Activated B cell treated with CpG ODN at 0.5 μM for 24 hours (primary cell): ENCODE measurements at regions of chr1 and their contacts with region 1.

Region 1: DNA sequence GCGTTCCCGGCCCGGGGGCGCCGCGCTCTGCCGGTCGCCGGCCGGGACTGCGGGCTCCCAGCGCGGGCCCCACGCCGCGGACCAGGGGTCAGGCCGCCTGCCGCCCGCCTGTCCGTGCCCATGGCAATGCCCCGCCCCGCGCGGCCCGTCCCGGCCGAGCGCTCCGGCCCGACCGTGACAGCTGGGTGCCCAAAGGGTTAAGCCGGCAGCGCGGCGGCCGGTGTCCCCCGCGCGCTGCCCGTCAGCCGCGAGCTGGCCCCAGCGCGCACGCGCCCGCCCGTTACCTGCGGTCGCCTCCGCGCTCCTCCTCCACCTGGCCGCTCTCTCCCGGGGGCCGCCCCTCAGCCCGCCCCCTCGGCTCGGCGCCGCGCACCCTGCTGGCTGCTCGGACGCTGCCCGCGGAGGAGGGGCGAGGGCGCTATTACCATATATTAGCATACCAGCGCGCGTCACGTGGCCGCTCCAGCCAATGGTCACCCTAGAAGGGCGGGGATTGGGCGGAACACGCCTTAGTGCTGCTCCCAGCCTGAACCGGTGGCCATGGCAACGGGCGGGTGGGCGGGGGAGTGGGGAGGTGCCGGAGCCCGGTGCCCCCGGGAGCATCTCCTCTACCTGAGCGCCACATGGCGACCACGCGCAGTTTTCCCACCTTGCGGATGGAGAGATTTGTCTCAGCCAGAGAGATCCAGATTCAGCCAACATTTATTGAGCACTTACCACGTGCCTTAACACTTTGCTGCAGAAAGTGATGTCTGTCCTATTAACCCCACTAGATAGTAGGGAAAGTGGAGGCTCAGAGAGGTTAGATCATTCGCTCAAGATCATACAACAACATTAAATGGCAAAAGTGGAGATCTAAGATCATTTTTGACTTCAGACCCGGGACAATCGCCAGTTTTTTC is at the start of gene PHC2:
- DNase-seq: peak; percentile 85
- ATAC-seq: peak; percentile 96
- H3K4me3 Mint-ChIP-seq: peak within 1 kb of the TSS; percentile 66
- H3K27ac Mint-ChIP-seq: no peak within 1 kb of the TSS
- H3K4me1 Mint-ChIP-seq: peaks cover 5% of the 10 kb centered on the region
- H3K27me3 Mint-ChIP-seq: peaks cover 6% of the 10 kb centered on the region
- CTCF ChIP-seq: no peak
- total RNA-seq, gene PHC2: 16.4 and 18.1 TPM in 2 replicates

Region 2: DNA sequence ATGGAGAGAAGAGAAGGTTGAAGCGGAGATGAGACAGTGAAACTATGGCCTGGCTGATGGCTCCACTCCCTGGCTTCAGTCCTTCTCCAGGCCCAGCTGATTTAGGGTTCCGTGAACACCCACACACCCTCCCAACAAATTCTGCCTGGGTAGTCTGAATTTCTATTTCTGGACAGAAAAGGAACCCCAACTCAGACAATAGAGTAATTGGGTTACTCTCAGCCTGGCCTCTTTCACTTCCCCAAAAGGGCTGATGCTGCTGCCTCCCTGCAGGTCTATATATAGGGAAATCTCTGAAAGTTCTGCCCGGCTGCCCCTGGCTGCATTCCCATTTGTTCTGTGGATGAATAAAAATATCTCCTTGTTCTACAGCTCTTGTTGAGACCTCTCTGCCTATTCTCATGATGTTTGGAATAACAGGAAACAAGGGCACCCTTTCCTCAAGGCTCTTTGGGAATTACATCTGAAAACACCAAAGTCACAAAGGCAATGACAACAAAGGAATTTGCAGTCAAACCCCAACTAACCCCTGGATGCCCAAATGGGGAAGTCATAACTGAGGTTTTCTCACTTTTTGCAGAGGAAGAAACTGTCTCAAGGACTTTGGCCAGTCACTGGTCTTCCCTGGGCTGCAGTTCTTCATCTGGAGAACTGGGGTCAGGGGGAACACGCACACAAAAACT is 30.1 kb after region 1 on chr1:
- CTCF ChIA-PET with region 1: interaction called, 3 read pairs
- POLR2A ChIA-PET with region 1: no interaction called
- intact Hi-C with region 1: loop called (anchors 2 kb)
- DNase-seq: no peak
- ATAC-seq: peak; percentile 92
- H3K4me3 Mint-ChIP-seq: peak overlapping the region; percentile 76
- H3K27ac Mint-ChIP-seq: peak overlapping the region; percentile 75
- H3K4me1 Mint-ChIP-seq: peaks cover 49% of the 10 kb centered on the region
- H3K27me3 Mint-ChIP-seq: no peaks in the 10 kb centered on the region
- CTCF ChIP-seq: no peak